ENCODE measurements at regions of chr5 and their contacts with region 1.

Region 1: GRCh38 chr5:152142840-152143469 is 218.3 kb upstream of the GLRA1 start:
- DNase-seq: peak; percentile 36
- ATAC-seq: peak; percentile 47
- H3K4me3 Mint-ChIP-seq: no peak overlapping the region
- H3K27ac Mint-ChIP-seq: no peak overlapping the region
- H3K4me1 Mint-ChIP-seq: no peaks in the 10 kb centered on the region
- H3K27me3 Mint-ChIP-seq: peaks cover 2% of the 10 kb centered on the region
- CTCF ChIP-seq: peak; percentile 81

Region 2: GRCh38 chr5:151740336-151740942 is 402.5 kb before region 1 on chr5:
- CTCF ChIA-PET with region 1: no interaction called
- POLR2A ChIA-PET with region 1: no interaction called
- intact Hi-C with region 1: loop called (anchors 2 kb)
- DNase-seq: no peak
- ATAC-seq: peak; percentile 69
- H3K4me3 Mint-ChIP-seq: no peak overlapping the region
- H3K27ac Mint-ChIP-seq: no peak overlapping the region
- H3K4me1 Mint-ChIP-seq: peaks cover 16% of the 10 kb centered on the region
- H3K27me3 Mint-ChIP-seq: no peaks in the 10 kb centered on the region
- CTCF ChIP-seq: peak; percentile 68

Region 3: DNA sequence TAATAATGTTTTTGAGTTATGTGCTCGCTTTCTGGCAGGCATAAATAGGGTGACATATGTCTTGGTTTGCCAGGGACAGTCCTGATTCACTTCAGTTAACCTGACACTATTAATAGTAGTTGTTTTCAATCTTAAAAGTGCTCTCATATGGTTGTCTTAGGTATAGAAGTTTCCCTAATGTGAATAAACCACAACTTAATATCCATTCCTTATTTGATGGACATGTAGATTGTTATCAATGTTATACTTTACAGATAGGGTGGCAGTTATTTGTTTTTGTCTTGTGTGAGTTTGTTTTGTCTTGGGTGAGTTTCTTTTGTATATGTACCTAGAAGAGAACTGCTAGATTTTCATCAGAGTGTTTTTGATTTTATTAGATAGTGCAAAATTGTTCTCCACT is 363.3 kb before region 1 on chr5:
- CTCF ChIA-PET with region 1: no interaction called
- POLR2A ChIA-PET with region 1: no interaction called
- intact Hi-C with region 1: no loop called
- DNase-seq: no peak
- ATAC-seq: peak; percentile 40
- H3K4me3 Mint-ChIP-seq: peak overlapping the region; percentile 5
- H3K27ac Mint-ChIP-seq: peak overlapping the region; percentile 3
- H3K4me1 Mint-ChIP-seq: peaks cover 86% of the 10 kb centered on the region
- H3K27me3 Mint-ChIP-seq: no peaks in the 10 kb centered on the region
- CTCF ChIP-seq: no peak

Region 4: DNA sequence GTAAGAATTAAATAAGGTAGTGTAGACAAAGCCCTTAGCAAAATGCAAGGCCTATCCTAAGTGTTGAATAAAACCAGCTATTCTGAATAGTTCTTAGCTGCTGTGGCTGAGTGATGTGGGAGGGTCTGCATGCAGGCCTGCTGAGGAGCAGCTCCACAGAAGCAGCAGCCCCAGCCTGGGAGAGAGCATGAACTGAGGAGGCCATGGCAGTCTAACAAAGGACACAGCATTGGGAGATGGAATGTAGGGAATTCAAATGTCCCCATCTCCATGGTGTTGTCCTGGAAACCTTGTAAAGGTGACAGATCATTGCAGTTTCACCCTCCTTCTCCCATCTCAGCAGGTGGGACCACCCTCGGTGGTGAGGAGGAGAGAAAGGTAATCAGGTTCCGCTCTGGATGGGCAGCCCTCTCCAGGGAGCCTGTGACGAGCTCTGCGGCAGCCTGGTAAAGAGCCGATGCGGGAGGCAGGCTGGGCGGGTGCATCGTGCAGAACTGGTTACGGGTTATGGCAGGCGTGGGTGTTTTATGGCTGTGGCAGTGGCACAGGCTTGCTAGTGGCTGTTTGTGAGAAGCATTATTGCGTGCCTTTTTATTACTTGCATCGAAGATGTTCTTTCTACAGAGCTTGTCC is 18.4 kb before region 1 on chr5:
- CTCF ChIA-PET with region 1: interaction called, 10 read pairs
- POLR2A ChIA-PET with region 1: no interaction called
- intact Hi-C with region 1: no loop called
- DNase-seq: no peak
- ATAC-seq: no peak
- H3K4me3 Mint-ChIP-seq: no peak overlapping the region
- H3K27ac Mint-ChIP-seq: no peak overlapping the region
- H3K4me1 Mint-ChIP-seq: no peaks in the 10 kb centered on the region
- H3K27me3 Mint-ChIP-seq: peaks cover 7% of the 10 kb centered on the region
- CTCF ChIP-seq: no peak